CD4-positive, alpha-beta T cell (primary cell): ENCODE measurements at regions of chr18 and their contacts with region 1.

Region 1: GRCh38 chr18:70431203-70431624 is 142.4 kb downstream of the SOCS6 start:
- DNase-seq: no peak
- ATAC-seq: no peak
- H3K4me3 ChIP-seq: no peak overlapping the region
- H3K4me3 Mint-ChIP-seq: no peak overlapping the region
- H3K27ac ChIP-seq: no peak overlapping the region
- H3K27ac Mint-ChIP-seq: no peak overlapping the region
- H3K4me1 ChIP-seq: no peaks in the 10 kb centered on the region
- H3K4me1 Mint-ChIP-seq: no peaks in the 10 kb centered on the region
- H3K27me3 ChIP-seq: no peaks in the 10 kb centered on the region
- H3K27me3 Mint-ChIP-seq: no peaks in the 10 kb centered on the region
- CTCF ChIP-seq: no peak

Region 2: GRCh38 chr18:68847219-68847837 is 1583.9 kb before region 1 on chr18:
- CTCF ChIA-PET with region 1: no interaction called
- POLR2A ChIA-PET with region 1: no interaction called
- intact Hi-C with region 1: loop called (anchors 2 to 5 kb)
- DNase-seq: peak in 3 of 14 experiments; percentile 12 to 23 (median 21)
- ATAC-seq: no peak
- H3K4me3 ChIP-seq: no peak overlapping the region
- H3K4me3 Mint-ChIP-seq: no peak overlapping the region
- H3K27ac ChIP-seq: no peak overlapping the region
- H3K27ac Mint-ChIP-seq: no peak overlapping the region
- H3K4me1 ChIP-seq: no peaks in the 10 kb centered on the region
- H3K4me1 Mint-ChIP-seq: no peaks in the 10 kb centered on the region
- H3K27me3 ChIP-seq: no peaks in the 10 kb centered on the region
- H3K27me3 Mint-ChIP-seq: no peaks in the 10 kb centered on the region
- CTCF ChIP-seq: peak; percentile 59

Region 3: GRCh38 chr18:70082430-70082829 is 348.8 kb before region 1 on chr18:
- CTCF ChIA-PET with region 1: no interaction called
- POLR2A ChIA-PET with region 1: no interaction called
- intact Hi-C with region 1: no loop called
- DNase-seq: no peak
- ATAC-seq: no peak
- H3K4me3 ChIP-seq: no peak overlapping the region
- H3K4me3 Mint-ChIP-seq: no peak overlapping the region
- H3K27ac ChIP-seq: no peak overlapping the region
- H3K27ac Mint-ChIP-seq: no peak overlapping the region
- H3K4me1 ChIP-seq: no peaks in the 10 kb centered on the region
- H3K4me1 Mint-ChIP-seq: no peaks in the 10 kb centered on the region
- H3K27me3 ChIP-seq: no peaks in the 10 kb centered on the region
- H3K27me3 Mint-ChIP-seq: no peaks in the 10 kb centered on the region
- CTCF ChIP-seq: no peak

Region 4: DNA sequence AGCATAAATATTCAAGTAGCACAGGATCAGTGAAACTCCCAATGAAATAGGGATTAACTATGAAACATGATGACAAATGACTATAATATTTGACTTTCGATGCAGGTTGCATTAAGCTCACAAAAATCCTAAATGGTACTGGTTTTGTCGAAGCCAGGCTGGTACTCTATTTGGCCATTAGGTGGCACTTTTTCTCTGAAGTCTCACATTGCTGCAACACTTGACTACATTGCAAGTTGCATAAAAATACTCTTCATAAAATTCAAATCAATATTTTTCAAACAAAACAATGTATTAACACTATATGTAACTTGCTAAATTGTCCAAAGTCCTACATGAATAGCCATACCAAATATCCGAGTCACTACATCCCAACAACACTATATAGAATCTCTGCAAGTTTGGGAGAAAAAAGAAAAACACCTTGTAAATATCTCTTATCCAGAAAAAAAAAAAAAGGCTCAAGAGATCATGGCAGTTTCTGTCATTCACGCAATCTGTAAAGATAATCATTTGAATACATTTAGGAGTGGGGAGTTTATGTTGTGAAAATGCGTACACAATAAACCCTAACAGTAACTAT is 235.3 kb before region 1 on chr18:
- CTCF ChIA-PET with region 1: interaction called, 5 read pairs
- POLR2A ChIA-PET with region 1: no interaction called
- intact Hi-C with region 1: loop called (anchors 1 to 2 kb)
- DNase-seq: peak in 4 of 14 experiments; percentile 19 to 49 (median 38)
- ATAC-seq: peak; percentile 52
- H3K4me3 ChIP-seq: no peak overlapping the region
- H3K4me3 Mint-ChIP-seq: no peak overlapping the region
- H3K27ac ChIP-seq: no peak overlapping the region
- H3K27ac Mint-ChIP-seq: no peak overlapping the region
- H3K4me1 ChIP-seq: no peaks in the 10 kb centered on the region
- H3K4me1 Mint-ChIP-seq: peaks cover 12% of the 10 kb centered on the region
- H3K27me3 ChIP-seq: no peaks in the 10 kb centered on the region
- H3K27me3 Mint-ChIP-seq: no peaks in the 10 kb centered on the region
- CTCF ChIP-seq: peak; percentile 69